HepG2 (cell line): ENCODE measurements at regions of chr11 and their contacts with region 1.

Region 1: DNA sequence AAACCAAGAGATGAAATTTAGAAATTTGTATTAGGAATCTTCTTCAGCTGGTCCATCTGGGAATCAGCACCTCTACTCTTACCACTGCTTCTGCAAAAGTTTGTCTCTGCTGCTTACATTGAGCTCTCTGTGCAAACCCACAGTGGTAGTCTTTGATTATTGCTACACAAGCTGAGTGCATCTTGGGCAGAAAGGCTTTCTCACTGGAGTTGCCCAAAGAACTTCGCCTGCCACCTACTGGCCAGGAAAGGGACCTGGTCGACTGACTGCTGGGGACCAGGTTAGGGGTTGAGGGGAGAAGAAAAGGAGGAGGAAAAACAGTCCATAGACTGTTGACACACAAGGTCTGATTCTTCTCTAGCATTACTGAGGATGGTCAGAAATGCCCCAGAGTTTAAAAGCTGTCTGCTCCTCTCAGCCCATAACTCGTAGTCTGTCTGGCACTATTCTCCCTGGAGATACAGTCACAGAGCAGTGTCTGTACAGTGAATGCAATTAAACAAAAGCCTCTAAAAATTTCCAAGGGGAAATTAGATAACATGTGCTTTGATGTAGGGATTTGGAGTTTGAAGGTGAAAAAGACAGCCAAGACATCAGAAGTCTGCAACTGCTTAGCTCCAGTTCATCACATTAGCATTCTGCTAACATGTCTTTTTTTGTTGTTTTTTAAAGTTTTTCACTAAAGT is 215.0 kb upstream of the CTSC start:
- DNase-seq: peak; percentile 39
- ATAC-seq: peak; percentile 98
- H3K4me3 ChIP-seq: no peak overlapping the region
- H3K27ac ChIP-seq: no peak overlapping the region
- H3K4me1 ChIP-seq: no peaks in the 10 kb centered on the region
- H3K27me3 ChIP-seq: no peaks in the 10 kb centered on the region
- CTCF ChIP-seq: peak; percentile 75
- EP300 ChIP-seq: no peak
- POLR2A ChIP-seq: no peak
- RAD21 ChIP-seq: no peak

Region 2: DNA sequence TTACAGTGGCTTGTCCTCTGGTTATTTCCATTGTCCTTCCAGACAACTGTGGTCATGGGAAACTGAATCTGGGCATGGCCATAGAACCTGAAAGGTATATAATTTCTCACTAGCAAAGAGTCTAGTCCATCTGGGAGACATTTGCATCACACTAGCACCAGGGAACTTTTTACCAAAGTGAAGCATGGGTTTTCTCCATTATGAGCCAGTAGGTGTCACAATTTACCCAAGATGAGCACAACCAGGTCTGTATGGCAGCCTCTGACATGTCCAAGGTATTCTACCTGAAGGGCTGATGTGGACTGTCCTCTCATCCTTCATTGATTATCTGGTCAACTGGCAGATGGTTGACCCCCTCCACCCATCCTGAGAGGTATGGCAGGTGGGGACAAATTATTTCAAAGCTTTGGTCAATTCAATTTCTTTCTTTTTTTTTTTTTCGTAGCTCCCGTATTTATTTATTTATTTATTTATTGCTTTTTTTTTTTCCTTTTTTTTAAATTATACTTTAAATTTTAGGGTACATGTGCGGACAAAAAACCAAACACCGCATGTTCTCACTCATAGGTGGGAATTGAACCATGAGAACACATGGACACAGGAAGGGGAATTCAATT is 1088.9 kb before region 1 on chr11:
- CTCF ChIA-PET with region 1: no interaction called
- POLR2A ChIA-PET with region 1: no interaction called
- in situ Hi-C with region 1: loop called (anchors 25 kb)
- intact Hi-C with region 1: loop called (anchors 5 kb)
- DNase-seq: peak; percentile 38
- ATAC-seq: peak; percentile 94
- H3K4me3 ChIP-seq: no peak overlapping the region
- H3K27ac ChIP-seq: no peak overlapping the region
- H3K4me1 ChIP-seq: no peaks in the 10 kb centered on the region
- H3K27me3 ChIP-seq: no peaks in the 10 kb centered on the region; a peak in 2 of 5 replicates
- CTCF ChIP-seq: peak; percentile 66
- EP300 ChIP-seq: no peak
- POLR2A ChIP-seq: no peak
- RAD21 ChIP-seq: no peak

Region 3: GRCh38 chr11:87878373-87878779 is 674.1 kb before region 1 on chr11:
- CTCF ChIA-PET with region 1: no interaction called
- POLR2A ChIA-PET with region 1: no interaction called
- in situ Hi-C with region 1: no loop called
- intact Hi-C with region 1: loop called (anchors 5 kb)
- DNase-seq: peak; percentile 2
- ATAC-seq: no peak
- H3K4me3 ChIP-seq: no peak overlapping the region
- H3K27ac ChIP-seq: no peak overlapping the region
- H3K4me1 ChIP-seq: no peaks in the 10 kb centered on the region
- H3K27me3 ChIP-seq: no peaks in the 10 kb centered on the region; a peak in 1 of 5 replicates
- CTCF ChIP-seq: 0 out of 2 replicates have a peak, but pooled peaks have one; percentile 6
- EP300 ChIP-seq: no peak
- POLR2A ChIP-seq: no peak
- RAD21 ChIP-seq: no peak

Region 4: GRCh38 chr11:88016392-88017170 is 535.9 kb before region 1 on chr11:
- CTCF ChIA-PET with region 1: interaction called, 4 read pairs
- POLR2A ChIA-PET with region 1: no interaction called
- in situ Hi-C with region 1: loop called (anchors 25 kb)
- intact Hi-C with region 1: loop called (anchors 1 kb)
- DNase-seq: peak; percentile 78
- ATAC-seq: peak; percentile 96
- H3K4me3 ChIP-seq: no peak overlapping the region
- H3K27ac ChIP-seq: no peak overlapping the region
- H3K4me1 ChIP-seq: no peaks in the 10 kb centered on the region
- H3K27me3 ChIP-seq: no peaks in the 10 kb centered on the region; a peak in 1 of 5 replicates
- CTCF ChIP-seq: peak; percentile 79
- EP300 ChIP-seq: no peak
- POLR2A ChIP-seq: no peak
- RAD21 ChIP-seq: 0 out of 2 replicates have a peak, but pooled peaks have one; percentile 24

Region 5: GRCh38 chr11:88603091-88603867 is 50.8 kb after region 1 on chr11:
- CTCF ChIA-PET with region 1: no interaction called
- POLR2A ChIA-PET with region 1: no interaction called
- in situ Hi-C with region 1: no loop called
- intact Hi-C with region 1: no loop called
- DNase-seq: no peak
- ATAC-seq: no peak
- H3K4me3 ChIP-seq: no peak overlapping the region
- H3K27ac ChIP-seq: no peak overlapping the region
- H3K4me1 ChIP-seq: no peaks in the 10 kb centered on the region
- H3K27me3 ChIP-seq: no peaks in the 10 kb centered on the region; a peak in 1 of 5 replicates
- CTCF ChIP-seq: no peak
- EP300 ChIP-seq: no peak
- POLR2A ChIP-seq: no peak
- RAD21 ChIP-seq: no peak